Ovary (tissue), 10 donors: ENCODE measurements at regions of chr20 and their contacts with region 1.

Region 1: GRCh38 chr20:5126512-5127203 is at the start of gene CDS2:
- DNase-seq: peak; percentile 100
- H3K4me3 ChIP-seq: peak within 1 kb of the TSS; percentile 54
- H3K27ac ChIP-seq: peak within 1 kb of the TSS; percentile 81
- H3K4me1 ChIP-seq: peaks cover 4% of the 10 kb centered on the region
- H3K27me3 ChIP-seq: no peaks in the 10 kb centered on the region
- CTCF ChIP-seq: peak; percentile 45 to 86 (median 64)
- EP300 ChIP-seq: no peak
- POLR2A ChIP-seq: peak; percentile 80
- total RNA-seq, gene CDS2: 18.5 to 43.7 (median 37.6) TPM

Region 2: DNA sequence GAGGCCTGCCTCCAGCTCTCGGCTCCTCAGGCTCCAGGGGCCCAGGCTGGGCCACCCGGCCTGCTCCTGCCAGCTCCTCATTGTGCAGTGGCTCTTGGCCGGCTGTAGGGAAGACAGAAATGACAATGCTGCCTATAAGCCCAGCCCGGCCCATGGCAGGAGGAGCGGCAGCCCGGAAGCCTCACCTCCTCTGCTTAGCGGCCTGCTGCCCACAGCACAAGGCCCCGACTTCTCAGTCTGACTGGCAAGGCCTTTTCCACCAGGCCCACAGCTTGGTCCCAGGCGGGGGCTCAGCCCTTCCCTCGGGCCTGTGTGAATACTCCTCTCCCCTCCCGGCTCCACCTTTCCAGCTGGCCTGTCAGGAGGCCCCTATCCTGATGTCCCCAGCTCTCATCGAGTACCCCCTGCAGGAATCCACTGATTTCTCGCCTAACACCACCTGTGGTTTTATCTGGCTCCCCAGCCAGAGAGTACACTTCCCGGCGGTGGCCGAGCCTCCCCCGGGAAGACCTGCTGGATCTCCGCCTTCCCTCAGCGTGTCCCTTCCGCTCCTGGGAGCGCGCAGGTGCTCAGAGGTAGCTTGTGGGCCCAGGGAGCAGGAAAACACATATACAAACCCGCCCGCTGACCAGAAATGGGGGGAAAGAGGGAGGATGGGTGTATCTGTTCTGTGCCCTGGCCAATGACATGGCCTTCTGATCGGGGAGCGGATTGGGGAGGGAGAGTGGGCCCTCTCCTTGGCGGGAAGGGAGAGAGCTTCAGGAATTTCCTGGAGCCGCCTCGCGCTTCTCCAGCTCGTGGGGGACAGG is 1923.1 kb before region 1 on chr20:
- intact Hi-C with region 1: no loop called
- DNase-seq: peak in 1 of 5 donors; percentile 37
- H3K4me3 ChIP-seq: peak overlapping the region; percentile 70
- H3K27ac ChIP-seq: peak overlapping the region in 1 of 2 donors; percentile 24
- H3K4me1 ChIP-seq: peaks cover 7% of the 10 kb centered on the region
- H3K27me3 ChIP-seq: no peaks in the 10 kb centered on the region
- CTCF ChIP-seq: no peak
- EP300 ChIP-seq: no peak
- POLR2A ChIP-seq: no peak

Region 3: DNA sequence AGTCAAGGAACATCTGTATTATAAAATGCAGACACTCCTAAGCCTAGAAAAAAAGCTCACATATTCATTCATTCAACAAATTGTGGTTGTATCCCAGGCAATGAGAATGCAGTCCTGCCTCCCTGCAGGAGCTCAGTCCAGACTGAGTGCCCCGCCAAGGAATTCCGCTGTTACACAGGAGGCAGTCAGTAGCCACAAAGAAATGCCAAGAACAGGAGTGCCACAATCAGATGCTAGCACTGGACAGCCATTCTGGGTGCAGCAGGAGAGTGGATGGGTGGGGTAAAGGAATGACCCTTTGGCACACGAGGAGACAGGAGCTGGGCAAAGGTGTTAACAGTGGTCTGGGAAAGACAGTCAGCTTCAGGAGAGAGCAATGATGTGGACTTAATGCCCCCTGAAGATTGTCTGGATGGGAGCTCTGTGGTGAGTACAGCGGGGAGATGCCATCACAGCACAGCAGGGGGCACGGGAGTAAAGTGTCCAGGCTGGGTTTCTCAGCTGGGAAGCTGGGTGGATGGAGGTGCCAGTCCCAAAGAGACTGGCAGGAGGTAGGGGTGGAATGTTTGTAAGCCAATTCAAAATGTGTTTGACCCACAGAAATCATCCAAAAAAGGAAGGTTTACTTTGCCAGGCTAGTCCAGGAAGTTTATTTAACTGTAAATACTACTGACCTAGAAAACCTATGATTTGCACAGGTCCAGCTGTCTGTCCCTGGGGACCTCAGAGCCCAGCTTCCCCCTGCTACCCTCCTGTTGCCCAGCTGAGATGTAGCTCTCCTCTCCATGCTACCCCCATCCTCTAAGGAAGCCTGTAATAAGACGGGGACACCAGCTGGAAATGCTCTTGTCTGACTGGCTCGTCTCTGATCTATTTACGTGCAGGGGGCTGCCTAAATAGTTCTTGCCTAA is 209.4 kb before region 1 on chr20:
- intact Hi-C with region 1: no loop called
- DNase-seq: no peak
- H3K4me3 ChIP-seq: no peak overlapping the region
- H3K27ac ChIP-seq: peak overlapping the region in 1 of 2 donors; percentile 13
- H3K4me1 ChIP-seq: peaks cover 24% of the 10 kb centered on the region
- H3K27me3 ChIP-seq: no peaks in the 10 kb centered on the region
- CTCF ChIP-seq: no peak
- EP300 ChIP-seq: no peak
- POLR2A ChIP-seq: no peak

Region 4: GRCh38 chr20:5039255-5039657 is 87.4 kb before region 1 on chr20:
- intact Hi-C with region 1: no loop called
- DNase-seq: no peak
- H3K4me3 ChIP-seq: no peak overlapping the region
- H3K27ac ChIP-seq: no peak overlapping the region
- H3K4me1 ChIP-seq: peaks cover 2% of the 10 kb centered on the region
- H3K27me3 ChIP-seq: no peaks in the 10 kb centered on the region
- CTCF ChIP-seq: no peak
- EP300 ChIP-seq: no peak
- POLR2A ChIP-seq: no peak

Region 5: GRCh38 chr20:5171064-5171789 is 44.6 kb after region 1 on chr20:
- intact Hi-C with region 1: loop called in 1 of 4 experiments (anchors 5 kb)
- DNase-seq: peak; percentile 22 to 55 (median 46)
- H3K4me3 ChIP-seq: no peak overlapping the region
- H3K27ac ChIP-seq: peak overlapping the region in 1 of 2 donors; percentile 41
- H3K4me1 ChIP-seq: peaks cover 12% of the 10 kb centered on the region
- H3K27me3 ChIP-seq: no peaks in the 10 kb centered on the region
- CTCF ChIP-seq: no peak
- EP300 ChIP-seq: no peak
- POLR2A ChIP-seq: no peak

Region 6: DNA sequence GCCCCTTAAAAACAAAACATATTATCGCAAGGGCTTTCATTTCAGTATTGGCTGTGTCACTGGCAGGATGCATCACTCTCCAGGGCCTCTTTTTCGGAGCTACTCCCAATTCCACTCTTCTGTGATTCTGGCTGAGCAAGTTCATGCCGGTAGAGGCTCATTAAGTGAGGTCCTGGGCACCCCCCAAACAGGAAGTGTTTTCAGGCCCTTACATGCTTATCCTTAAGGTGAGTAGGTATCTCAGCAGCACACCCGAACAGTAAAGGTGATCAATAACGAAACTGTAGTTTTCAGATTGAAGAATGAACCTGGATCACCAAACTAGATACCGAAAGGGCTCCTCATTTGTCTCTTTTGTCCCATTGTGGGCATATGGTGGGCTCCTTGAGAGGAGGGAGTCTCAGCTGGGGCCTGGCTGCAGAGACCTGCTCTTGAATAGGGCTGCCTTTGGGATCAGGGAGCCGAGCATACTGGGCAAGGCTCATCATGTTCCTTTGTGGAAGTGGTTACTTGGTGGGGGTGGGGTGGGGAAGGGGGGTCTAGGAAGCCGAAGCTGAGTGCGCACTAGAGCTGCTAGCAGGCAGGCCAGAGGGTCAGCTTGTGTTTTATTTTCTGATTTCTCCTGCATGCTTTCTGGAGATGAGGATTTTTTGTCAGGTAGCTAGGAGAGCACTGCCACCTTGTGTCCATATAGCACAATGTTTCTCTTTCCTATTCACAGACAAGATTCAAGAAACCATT is 65.3 kb after region 1 on chr20:
- intact Hi-C with region 1: loop called (anchors 2 to 5 kb)
- DNase-seq: peak; percentile 47 to 69 (median 50)
- H3K4me3 ChIP-seq: no peak overlapping the region
- H3K27ac ChIP-seq: peak overlapping the region; percentile 14 to 70
- H3K4me1 ChIP-seq: no peaks in the 10 kb centered on the region
- H3K27me3 ChIP-seq: no peaks in the 10 kb centered on the region
- CTCF ChIP-seq: peak; percentile 62 to 76 (median 69)
- EP300 ChIP-seq: no peak
- POLR2A ChIP-seq: no peak